ENCODE measurements at regions of chr3 and their contacts with region 1.

Region 1: DNA sequence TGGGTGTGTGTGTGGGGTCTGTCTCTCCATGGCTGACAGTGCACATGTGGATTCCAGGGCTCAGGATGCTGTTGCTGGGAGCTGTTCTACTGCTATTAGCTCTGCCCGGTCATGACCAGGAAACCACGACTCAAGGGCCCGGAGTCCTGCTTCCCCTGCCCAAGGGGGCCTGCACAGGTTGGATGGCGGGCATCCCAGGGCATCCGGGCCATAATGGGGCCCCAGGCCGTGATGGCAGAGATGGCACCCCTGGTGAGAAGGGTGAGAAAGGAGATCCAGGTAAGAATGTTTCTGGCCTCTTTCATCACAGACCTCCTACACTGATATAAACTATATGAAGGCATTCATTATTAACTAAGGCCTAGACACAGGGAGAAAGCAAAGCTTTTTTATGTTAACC is 10.5 kb downstream of the ADIPOQ start:
- DNase-seq: no peak
- H3K4me3 ChIP-seq: no peak overlapping the region
- CTCF ChIP-seq: no peak
- POLR2A ChIP-seq: no peak

Region 2: DNA sequence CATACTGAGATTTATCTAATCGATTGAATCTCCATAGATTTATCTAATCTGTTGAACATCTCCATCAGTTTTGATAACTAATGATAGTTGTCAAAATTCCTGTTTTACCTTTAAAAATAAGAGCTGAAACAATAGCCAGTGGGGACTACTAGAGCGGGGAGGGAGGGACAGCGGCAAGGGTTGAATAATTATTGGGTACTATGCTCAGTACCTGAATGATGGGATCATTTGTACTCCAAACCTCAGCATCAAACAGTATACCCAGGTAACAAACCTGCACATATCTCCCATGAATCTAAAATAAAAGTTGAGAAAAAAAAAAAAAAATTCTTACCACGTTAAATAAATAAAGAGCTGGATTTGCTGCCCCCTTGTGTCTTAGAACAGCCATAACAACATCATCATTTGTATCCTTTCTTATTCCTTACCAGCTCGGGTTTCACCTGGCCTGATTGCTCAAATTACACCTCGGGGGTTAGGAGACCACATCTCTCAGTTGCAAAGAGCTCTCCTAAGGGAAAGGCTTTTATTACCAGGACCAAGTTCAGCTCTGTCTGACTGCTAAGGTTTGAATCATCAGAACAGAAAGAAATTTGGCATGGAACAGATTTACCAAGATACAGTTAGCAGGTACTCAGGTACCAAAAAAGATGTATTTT is 312.0 kb after region 1 on chr3:
- intact Hi-C with region 1: loop called (anchors 10 kb)
- DNase-seq: peak in 1 of 2 donors; percentile 47
- H3K4me3 ChIP-seq: no peak overlapping the region
- CTCF ChIP-seq: peak in 1 of 3 donors; percentile 15
- POLR2A ChIP-seq: no peak